Activated naive CD8-positive, alpha-beta T cell treated with anti-CD3 and anti-CD28 coated beads, Interleukin-2, amount 10 ng/mL, durations not matched to agents 7 days and 5 days (primary cell): ENCODE measurements at regions of chr17 and their contacts with region 1.

Region 1: GRCh38 chr17:6755731-6756184 is at the start of gene XAF1:
- DNase-seq: peak; percentile 67
- ATAC-seq: peak; percentile 72
- H3K4me3 Mint-ChIP-seq: peak within 1 kb of the TSS; percentile 97
- H3K27ac Mint-ChIP-seq: peak within 1 kb of the TSS; percentile 99
- H3K4me1 Mint-ChIP-seq: peaks cover 56% of the 10 kb centered on the region
- H3K27me3 Mint-ChIP-seq: no peaks in the 10 kb centered on the region
- total RNA-seq, gene XAF1: 280 to 302 TPM

Region 2: DNA sequence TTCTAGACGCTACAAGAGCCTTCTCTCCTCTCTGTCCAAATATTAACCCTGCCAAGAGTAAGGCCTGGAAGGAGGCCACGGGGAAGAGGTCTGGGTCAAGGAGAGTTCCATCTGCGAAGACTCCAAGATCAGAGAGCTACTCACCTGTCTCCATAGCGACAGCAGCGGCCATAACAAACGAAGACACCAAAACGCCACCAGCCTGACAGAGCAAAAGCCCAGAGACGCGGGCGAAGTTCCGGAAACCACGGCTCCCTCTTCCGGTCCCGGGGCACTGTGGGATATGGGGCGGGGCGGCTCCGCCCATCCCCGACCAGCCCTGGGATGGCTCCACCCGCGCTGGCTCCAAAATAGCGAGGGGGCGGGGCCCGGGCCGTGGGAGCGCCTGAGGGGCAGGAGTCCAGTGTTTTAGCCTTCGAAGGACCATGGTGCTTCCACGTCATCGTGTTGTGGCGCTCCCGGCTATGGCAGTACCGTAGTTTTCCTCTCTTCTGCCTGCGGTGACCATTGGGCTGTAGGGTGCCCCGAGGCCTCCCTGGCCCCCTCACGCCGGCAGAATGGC is 104.3 kb before region 1 on chr17 and contains the starts of genes C17orf100 and MED31:
- POLR2A ChIA-PET with region 1: interaction called, 15 read pairs
- DNase-seq: peak; percentile 96
- ATAC-seq: peak; percentile 93
- H3K4me3 Mint-ChIP-seq: peak within 1 kb of the TSS; percentile 97
- H3K27ac Mint-ChIP-seq: peak within 1 kb of the TSS; percentile 98
- H3K4me1 Mint-ChIP-seq: peaks cover 38% of the 10 kb centered on the region
- H3K27me3 Mint-ChIP-seq: peaks cover 6% of the 10 kb centered on the region
- total RNA-seq, gene C17orf100: 2.0 to 2.5 TPM
- total RNA-seq, gene MED31: 23.1 to 23.2 TPM

Region 3: GRCh38 chr17:6768447-6768846 is 12.7 kb after region 1 on chr17:
- POLR2A ChIA-PET with region 1: interaction called, 21 read pairs
- DNase-seq: no peak
- ATAC-seq: no peak
- H3K4me3 Mint-ChIP-seq: peak overlapping the region; percentile 2
- H3K27ac Mint-ChIP-seq: no peak overlapping the region
- H3K4me1 Mint-ChIP-seq: peaks cover 20% of the 10 kb centered on the region
- H3K27me3 Mint-ChIP-seq: no peaks in the 10 kb centered on the region

Region 4: DNA sequence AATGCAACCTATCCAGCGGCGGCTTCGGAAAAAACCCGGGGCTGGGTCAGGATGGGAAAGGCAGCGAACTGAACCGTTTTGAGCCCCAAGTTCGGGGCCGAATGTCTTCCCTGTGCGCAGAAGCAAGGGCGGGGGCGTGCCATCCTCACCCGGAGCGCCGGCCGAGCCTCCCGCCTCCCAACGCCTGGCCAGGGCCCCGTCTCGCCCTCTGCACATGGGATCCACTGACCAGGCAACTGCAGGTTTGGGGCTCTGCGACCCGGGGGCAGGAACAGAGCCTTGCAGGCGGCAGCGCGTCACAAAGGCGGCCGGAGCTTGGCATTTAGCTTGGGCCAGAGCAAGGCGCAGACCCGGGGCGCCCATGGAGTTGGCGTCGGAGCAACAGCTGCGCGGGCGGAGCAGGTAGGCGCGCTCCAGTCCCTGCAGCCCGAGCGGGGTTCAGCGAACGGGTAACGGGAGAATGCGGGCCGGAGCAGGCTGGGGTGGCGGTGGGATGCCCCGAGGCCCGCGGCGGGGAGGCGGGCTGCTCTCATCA is 20.2 kb after region 1 on chr17 and contains the start of gene FBXO39:
- POLR2A ChIA-PET with region 1: interaction called, 13 read pairs
- DNase-seq: peak; percentile 65
- ATAC-seq: peak; percentile 67
- H3K4me3 Mint-ChIP-seq: peak within 1 kb of the TSS; percentile 22
- H3K27ac Mint-ChIP-seq: no peak within 1 kb of the TSS
- H3K4me1 Mint-ChIP-seq: peaks cover 27% of the 10 kb centered on the region
- H3K27me3 Mint-ChIP-seq: peaks cover 11% of the 10 kb centered on the region
- total RNA-seq, gene FBXO39: 0.48 to 0.69 TPM